ENCODE measurements at regions of chr13 and their contacts with region 1.

Region 1: GRCh38 chr13:41019011-41019487 is at the start of gene ELF1:
- DNase-seq: peak; percentile 52
- CTCF ChIP-seq: no peak

Region 2: GRCh38 chr13:40206241-40207000 is 812.6 kb before region 1 on chr13:
- in situ Hi-C with region 1: no loop called
- DNase-seq: no peak
- CTCF ChIP-seq: no peak

Region 3: GRCh38 chr13:40508127-40508526 is 510.9 kb before region 1 on chr13:
- in situ Hi-C with region 1: no loop called
- DNase-seq: no peak
- CTCF ChIP-seq: no peak

Region 4: DNA sequence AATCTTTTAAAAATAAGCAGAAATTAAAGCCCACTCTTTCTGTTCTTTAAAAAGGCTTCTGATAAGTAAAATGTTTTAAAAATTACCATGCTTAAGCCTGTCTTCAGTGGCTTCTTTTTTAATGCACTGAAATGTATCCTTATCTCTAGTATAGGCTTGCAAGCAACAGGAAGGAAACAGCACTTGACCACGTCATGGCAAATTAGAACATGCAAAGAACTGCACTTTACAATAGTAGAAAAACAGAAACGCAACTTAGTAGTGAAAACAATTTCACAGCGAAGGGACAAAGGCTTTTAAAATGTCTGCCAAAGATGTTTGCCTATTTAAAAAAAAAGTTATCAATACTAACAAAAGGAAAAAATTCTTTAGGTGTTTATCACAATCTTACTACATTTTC is 36.3 kb before region 1 on chr13:
- in situ Hi-C with region 1: loop called (anchors 5 kb)
- DNase-seq: peak; percentile 57
- CTCF ChIP-seq: no peak